ENCODE measurements at regions of chr7 and their contacts with region 1.

Region 1: DNA sequence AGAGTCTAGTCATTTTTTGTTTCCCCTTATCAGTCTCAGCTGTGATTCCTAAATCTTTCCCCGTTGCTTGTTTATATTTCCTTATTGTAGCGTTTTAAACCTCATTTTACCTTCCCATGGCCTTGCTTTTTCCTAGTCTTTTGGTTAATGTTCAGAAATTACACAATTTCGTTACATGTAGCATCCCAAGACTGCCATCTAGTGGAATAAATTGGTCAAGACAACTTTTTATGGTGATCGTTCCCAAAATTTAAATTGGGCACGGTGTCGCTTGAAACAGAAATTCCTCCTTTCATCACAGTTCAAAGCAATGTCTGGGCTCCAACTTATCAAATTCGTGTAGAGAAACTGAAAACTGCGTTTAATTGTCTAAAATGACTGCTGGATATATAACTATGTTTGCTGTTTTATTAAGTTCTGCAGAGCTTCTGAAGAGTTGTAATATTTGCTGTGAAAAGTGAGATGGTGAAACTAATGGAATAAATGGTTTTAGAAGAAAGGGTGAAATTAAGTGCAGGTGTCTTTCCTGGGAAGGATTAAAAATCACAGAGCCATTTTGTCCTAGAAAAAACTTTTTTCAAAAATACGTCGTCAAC is 370.2 kb downstream of the PHF14 start:
- DNase-seq: peak; percentile 68
- H3K4me3 ChIP-seq: no peak overlapping the region
- H3K27ac ChIP-seq: no peak overlapping the region
- H3K4me1 ChIP-seq: no peaks in the 10 kb centered on the region
- H3K27me3 ChIP-seq: no peaks in the 10 kb centered on the region
- CTCF ChIP-seq: peak; percentile 76

Region 2: DNA sequence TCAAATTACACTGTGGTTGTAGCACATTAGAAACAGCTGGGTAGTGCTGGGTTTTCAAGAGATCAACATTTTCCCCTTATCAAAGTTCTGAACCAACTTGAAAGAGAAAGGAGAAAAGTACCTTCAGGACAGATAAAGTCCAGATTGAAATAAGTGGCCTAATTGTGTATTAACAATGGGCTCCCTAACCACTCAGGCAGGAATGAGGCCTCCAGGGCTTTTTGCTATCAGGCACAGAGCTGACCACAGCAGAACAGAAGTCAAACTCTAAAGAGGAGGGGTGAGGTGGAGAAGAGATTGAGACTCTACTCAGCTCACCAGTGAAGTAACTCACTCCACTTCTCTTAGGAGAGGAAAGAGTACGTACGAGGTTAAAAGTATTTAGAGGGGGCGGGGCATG is 764.4 kb before region 1 on chr7:
- CTCF ChIA-PET with region 1: no interaction called
- POLR2A ChIA-PET with region 1: no interaction called
- intact Hi-C with region 1: loop called (anchors 10 kb)
- DNase-seq: no peak
- H3K4me3 ChIP-seq: no peak overlapping the region
- H3K27ac ChIP-seq: no peak overlapping the region
- H3K4me1 ChIP-seq: no peaks in the 10 kb centered on the region
- H3K27me3 ChIP-seq: no peaks in the 10 kb centered on the region
- CTCF ChIP-seq: no peak

Region 3: GRCh38 chr7:10889266-10889898 is 454.5 kb before region 1 on chr7:
- CTCF ChIA-PET with region 1: no interaction called
- POLR2A ChIA-PET with region 1: no interaction called
- intact Hi-C with region 1: loop called (anchors 5 kb)
- DNase-seq: peak; percentile 75
- H3K4me3 ChIP-seq: no peak overlapping the region
- H3K27ac ChIP-seq: no peak overlapping the region
- H3K4me1 ChIP-seq: no peaks in the 10 kb centered on the region
- H3K27me3 ChIP-seq: no peaks in the 10 kb centered on the region
- CTCF ChIP-seq: peak; percentile 86

Region 4: GRCh38 chr7:11060893-11061292 is 283.0 kb before region 1 on chr7:
- CTCF ChIA-PET with region 1: no interaction called
- POLR2A ChIA-PET with region 1: no interaction called
- intact Hi-C with region 1: loop called (anchors 10 kb)
- DNase-seq: peak; percentile 9
- H3K4me3 ChIP-seq: no peak overlapping the region
- H3K27ac ChIP-seq: no peak overlapping the region
- H3K4me1 ChIP-seq: no peaks in the 10 kb centered on the region
- H3K27me3 ChIP-seq: no peaks in the 10 kb centered on the region
- CTCF ChIP-seq: no peak